Posterior vena cava (tissue), 2 donors: ENCODE measurements at regions of chr1 and their contacts with region 1.

Region 1: GRCh38 chr1:79188321-79188720 is 181.8 kb upstream of the ADGRL4 start:
- DNase-seq: no peak

Region 2: DNA sequence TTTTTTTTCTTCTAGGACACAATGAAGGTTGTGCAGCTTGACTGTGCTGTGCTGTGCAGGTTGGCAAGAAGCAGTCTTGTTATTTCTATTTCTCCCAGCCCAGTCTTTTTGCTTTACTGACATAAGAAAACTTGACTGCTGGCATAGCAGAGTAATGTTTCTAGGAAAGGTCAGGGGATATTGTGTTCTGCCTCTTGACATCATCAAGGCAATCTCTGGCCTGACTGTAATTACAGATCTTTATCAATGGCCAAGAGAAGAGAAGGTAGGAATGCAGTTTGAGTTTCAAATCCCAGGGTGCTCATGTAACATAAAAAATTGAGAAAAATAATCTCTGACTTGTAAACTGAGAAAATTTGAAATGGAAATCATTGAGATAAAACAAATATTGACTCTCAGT is 44.5 kb after region 1 on chr1:
- intact Hi-C with region 1: no loop called
- DNase-seq: no peak

Region 3: GRCh38 chr1:80221319-80221718 is 1033.0 kb after region 1 on chr1:
- intact Hi-C with region 1: loop called in 1 of 2 experiments (anchors 5 kb)
- DNase-seq: no peak